CD4-positive, alpha-beta T cell (primary cell): ENCODE measurements at regions of chr7 and their contacts with region 1.

Region 1: DNA sequence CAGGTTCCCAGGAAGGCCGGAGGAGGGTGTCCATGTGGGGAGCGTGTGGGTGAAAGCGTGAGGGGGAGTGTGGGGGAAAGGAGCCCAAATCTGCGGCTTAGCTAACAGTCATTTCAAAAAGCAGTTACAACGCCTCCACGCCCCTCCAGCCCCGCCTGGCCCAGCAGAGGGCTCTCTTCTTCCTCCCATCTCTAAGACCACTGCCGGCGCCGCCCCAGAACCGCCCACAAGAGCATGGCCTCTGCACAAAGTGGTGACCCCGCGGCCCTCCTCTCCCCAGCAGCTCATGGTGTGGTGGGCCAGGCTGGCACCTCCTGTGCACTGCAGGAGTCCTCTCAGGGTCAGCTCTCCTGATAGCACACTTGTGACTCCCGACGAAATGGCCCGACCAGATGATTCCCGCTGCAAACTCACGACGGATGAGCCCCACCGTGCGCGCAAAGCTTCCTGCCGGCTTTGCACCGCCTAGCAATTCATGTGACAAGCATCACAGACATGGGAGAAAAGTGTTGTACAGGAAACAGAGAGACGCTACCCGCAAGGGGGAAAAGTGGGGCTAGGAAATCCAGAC is 12.4 kb upstream of the HUS1 start:
- DNase-seq: peak; percentile 72 to 92 (median 86)
- ATAC-seq: peak; percentile 92
- H3K4me3 ChIP-seq: peak overlapping the region; percentile 74
- H3K4me3 Mint-ChIP-seq: peak overlapping the region; percentile 87
- H3K27ac ChIP-seq: peak overlapping the region; percentile 60 to 70
- H3K27ac Mint-ChIP-seq: peak overlapping the region; percentile 88
- H3K4me1 ChIP-seq: peaks cover 16% of the 10 kb centered on the region
- H3K4me1 Mint-ChIP-seq: peaks cover 24% of the 10 kb centered on the region
- H3K27me3 ChIP-seq: no peaks in the 10 kb centered on the region
- H3K27me3 Mint-ChIP-seq: no peaks in the 10 kb centered on the region
- CTCF ChIP-seq: peak; percentile 72

Region 2: GRCh38 chr7:47979145-47979831 is 12.5 kb before region 1 on chr7 and contains the start of gene HUS1:
- CTCF ChIA-PET with region 1: interaction called, 11 read pairs
- POLR2A ChIA-PET with region 1: interaction called, 9 read pairs
- intact Hi-C with region 1: no loop called
- DNase-seq: peak; percentile 85 to 96 (median 92)
- ATAC-seq: peak; percentile 98
- H3K4me3 ChIP-seq: peak within 1 kb of the TSS; percentile 83
- H3K4me3 Mint-ChIP-seq: peak within 1 kb of the TSS; percentile 92
- H3K27ac ChIP-seq: peak within 1 kb of the TSS; percentile 82 to 95
- H3K27ac Mint-ChIP-seq: peak within 1 kb of the TSS; percentile 92
- H3K4me1 ChIP-seq: peaks cover 22% of the 10 kb centered on the region
- H3K4me1 Mint-ChIP-seq: peaks cover 36% of the 10 kb centered on the region
- H3K27me3 ChIP-seq: no peaks in the 10 kb centered on the region
- H3K27me3 Mint-ChIP-seq: no peaks in the 10 kb centered on the region
- CTCF ChIP-seq: no peak
- total RNA-seq, gene HUS1: 77.8 to 83.1 TPM

Region 3: DNA sequence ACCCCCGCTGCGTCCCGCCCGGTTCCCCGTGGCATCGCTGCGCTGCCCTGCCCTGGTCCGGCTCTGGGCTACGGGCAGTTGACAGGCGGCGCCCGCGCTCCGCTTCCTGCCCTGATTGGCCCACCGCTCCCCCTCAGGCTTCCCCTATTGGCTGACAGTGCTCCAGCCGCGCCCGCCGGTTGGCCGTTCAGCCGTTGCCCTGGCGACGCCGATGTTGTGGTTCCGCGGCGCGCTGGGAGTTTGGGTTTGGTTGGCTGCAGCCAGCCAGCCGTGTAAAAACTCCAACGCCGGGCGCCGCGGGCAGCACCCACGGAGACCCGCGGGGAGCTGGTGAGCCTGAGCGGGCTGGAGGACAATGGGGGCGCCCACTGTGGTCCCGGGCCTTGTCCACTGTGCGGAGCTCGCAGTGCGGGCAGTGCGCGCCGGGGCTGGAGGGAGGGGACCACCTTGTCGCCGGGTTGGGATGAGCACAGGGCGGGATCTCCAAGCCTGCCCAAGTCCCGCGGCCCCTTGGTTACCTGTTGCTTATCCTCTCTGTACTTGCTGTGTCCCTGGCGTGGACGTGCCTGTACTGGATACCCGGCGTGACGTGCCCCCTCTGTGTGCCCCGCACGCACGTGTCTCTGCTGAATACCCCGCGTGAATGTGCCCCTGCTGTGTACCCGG is 43.6 kb after region 1 on chr7 and contains the start of gene C7orf57:
- CTCF ChIA-PET with region 1: interaction called, 6 read pairs
- POLR2A ChIA-PET with region 1: no interaction called
- intact Hi-C with region 1: loop called (anchors 2 to 5 kb)
- DNase-seq: peak; percentile 75 to 92 (median 84)
- ATAC-seq: peak; percentile 96
- H3K4me3 ChIP-seq: peak within 1 kb of the TSS; percentile 62
- H3K4me3 Mint-ChIP-seq: peak within 1 kb of the TSS; percentile 83
- H3K27ac ChIP-seq: no peak within 1 kb of the TSS
- H3K27ac Mint-ChIP-seq: no peak within 1 kb of the TSS
- H3K4me1 ChIP-seq: peaks cover 15% of the 10 kb centered on the region
- H3K4me1 Mint-ChIP-seq: peaks cover 13% of the 10 kb centered on the region
- H3K27me3 ChIP-seq: peaks cover 3 to 13% of the 10 kb centered on the region in 2 experiments
- H3K27me3 Mint-ChIP-seq: peaks cover 57% of the 10 kb centered on the region
- CTCF ChIP-seq: peak; percentile 42
- total RNA-seq, gene C7orf57: 0.56 TPM in 1 of 2 experiments, not detected in the other

Region 4: GRCh38 chr7:48088559-48089045 is 96.8 kb after region 1 on chr7:
- CTCF ChIA-PET with region 1: interaction called, 11 read pairs
- POLR2A ChIA-PET with region 1: interaction called, 40 read pairs
- intact Hi-C with region 1: loop called in 1 of 2 experiments (anchors 5 kb)
- DNase-seq: no peak
- ATAC-seq: peak; percentile 71
- H3K4me3 ChIP-seq: peak overlapping the region; percentile 82
- H3K4me3 Mint-ChIP-seq: peak overlapping the region; percentile 100
- H3K27ac ChIP-seq: peak overlapping the region; percentile 80 to 83
- H3K27ac Mint-ChIP-seq: peak overlapping the region; percentile 96
- H3K4me1 ChIP-seq: peaks cover 82% of the 10 kb centered on the region
- H3K4me1 Mint-ChIP-seq: peaks cover 80% of the 10 kb centered on the region
- H3K27me3 ChIP-seq: no peaks in the 10 kb centered on the region
- H3K27me3 Mint-ChIP-seq: no peaks in the 10 kb centered on the region
- CTCF ChIP-seq: no peak

Region 5: GRCh38 chr7:48101968-48102367 is 110.1 kb after region 1 on chr7:
- CTCF ChIA-PET with region 1: interaction called, 15 read pairs
- POLR2A ChIA-PET with region 1: interaction called, 5 read pairs
- intact Hi-C with region 1: no loop called
- DNase-seq: peak in 4 of 14 experiments; percentile 15 to 56 (median 50)
- ATAC-seq: no peak
- H3K4me3 ChIP-seq: no peak overlapping the region
- H3K4me3 Mint-ChIP-seq: no peak overlapping the region
- H3K27ac ChIP-seq: peak overlapping the region in 1 of 2 donors; percentile 9
- H3K27ac Mint-ChIP-seq: peak overlapping the region; percentile 71
- H3K4me1 ChIP-seq: peaks cover 47% of the 10 kb centered on the region
- H3K4me1 Mint-ChIP-seq: peaks cover 40% of the 10 kb centered on the region
- H3K27me3 ChIP-seq: no peaks in the 10 kb centered on the region
- H3K27me3 Mint-ChIP-seq: no peaks in the 10 kb centered on the region
- CTCF ChIP-seq: peak; percentile 38

Region 6: GRCh38 chr7:48139459-48139858 is 147.6 kb after region 1 on chr7:
- CTCF ChIA-PET with region 1: no interaction called
- POLR2A ChIA-PET with region 1: no interaction called
- intact Hi-C with region 1: no loop called
- DNase-seq: no peak
- ATAC-seq: no peak
- H3K4me3 ChIP-seq: no peak overlapping the region
- H3K4me3 Mint-ChIP-seq: no peak overlapping the region
- H3K27ac ChIP-seq: no peak overlapping the region
- H3K27ac Mint-ChIP-seq: no peak overlapping the region
- H3K4me1 ChIP-seq: no peaks in the 10 kb centered on the region
- H3K4me1 Mint-ChIP-seq: peaks cover 4% of the 10 kb centered on the region
- H3K27me3 ChIP-seq: no peaks in the 10 kb centered on the region
- H3K27me3 Mint-ChIP-seq: peaks cover 5% of the 10 kb centered on the region
- CTCF ChIP-seq: no peak